AG04449 (cell line): ENCODE measurements at regions of chr1 and their contacts with region 1.

Region 1: GRCh38 chr1:94061513-94062443 is 59.2 kb downstream of the ABCA4 start:
- DNase-seq: no peak
- H3K4me3 ChIP-seq: no peak overlapping the region
- CTCF ChIP-seq: peak; percentile 88

Region 2: GRCh38 chr1:93964777-93965200 is 97.0 kb before region 1 on chr1:
- CTCF ChIA-PET with region 1: no interaction called
- POLR2A ChIA-PET with region 1: no interaction called
- DNase-seq: no peak
- H3K4me3 ChIP-seq: no peak overlapping the region
- CTCF ChIP-seq: no peak

Region 3: DNA sequence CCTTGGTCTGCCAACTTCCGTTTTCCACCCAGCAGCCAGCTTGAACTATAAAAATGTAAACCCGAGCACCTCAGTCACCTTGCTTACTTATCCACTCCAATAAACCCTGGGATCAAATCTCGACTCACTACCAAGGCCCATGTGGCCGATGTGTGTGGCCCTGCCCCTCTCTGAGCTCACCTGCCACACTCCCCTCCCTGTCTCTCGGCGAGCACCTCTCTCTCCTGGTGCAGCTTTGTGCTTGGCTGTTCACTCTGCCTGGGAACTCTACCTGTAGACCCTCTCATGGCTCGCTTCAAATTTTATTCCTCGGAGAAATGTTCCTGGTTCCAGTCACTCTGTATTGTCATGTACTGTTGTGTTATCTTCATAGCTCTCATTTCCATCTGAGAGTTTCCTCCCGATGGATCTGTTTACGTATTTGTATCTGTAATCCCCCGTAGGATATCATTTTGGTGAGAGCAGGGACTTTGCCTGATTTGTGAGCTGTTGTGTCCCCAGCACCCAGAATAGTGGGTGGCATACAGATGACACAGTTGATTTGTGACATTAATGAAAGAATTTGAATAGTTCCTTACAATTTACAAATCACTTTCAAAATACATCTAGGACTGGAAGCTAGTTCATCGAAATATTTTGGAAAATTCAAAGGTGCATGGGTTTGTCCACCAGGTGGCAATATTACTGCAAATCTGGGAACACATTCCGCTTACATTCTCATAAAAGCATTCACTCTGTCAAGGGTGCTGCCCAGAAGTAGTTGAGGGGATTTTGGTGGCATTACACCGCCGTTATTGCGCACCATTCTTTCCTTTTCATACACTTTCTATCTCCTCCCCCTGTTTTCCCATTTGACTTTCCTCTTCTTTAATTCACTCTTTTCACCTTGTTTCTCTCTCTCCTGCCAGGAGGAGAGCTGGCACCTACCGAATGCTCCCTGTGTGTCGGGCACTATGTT is 36.1 kb before region 1 on chr1:
- CTCF ChIA-PET with region 1: interaction called, 102 read pairs
- POLR2A ChIA-PET with region 1: no interaction called
- DNase-seq: no peak
- H3K4me3 ChIP-seq: no peak overlapping the region
- CTCF ChIP-seq: peak; percentile 41

Region 4: DNA sequence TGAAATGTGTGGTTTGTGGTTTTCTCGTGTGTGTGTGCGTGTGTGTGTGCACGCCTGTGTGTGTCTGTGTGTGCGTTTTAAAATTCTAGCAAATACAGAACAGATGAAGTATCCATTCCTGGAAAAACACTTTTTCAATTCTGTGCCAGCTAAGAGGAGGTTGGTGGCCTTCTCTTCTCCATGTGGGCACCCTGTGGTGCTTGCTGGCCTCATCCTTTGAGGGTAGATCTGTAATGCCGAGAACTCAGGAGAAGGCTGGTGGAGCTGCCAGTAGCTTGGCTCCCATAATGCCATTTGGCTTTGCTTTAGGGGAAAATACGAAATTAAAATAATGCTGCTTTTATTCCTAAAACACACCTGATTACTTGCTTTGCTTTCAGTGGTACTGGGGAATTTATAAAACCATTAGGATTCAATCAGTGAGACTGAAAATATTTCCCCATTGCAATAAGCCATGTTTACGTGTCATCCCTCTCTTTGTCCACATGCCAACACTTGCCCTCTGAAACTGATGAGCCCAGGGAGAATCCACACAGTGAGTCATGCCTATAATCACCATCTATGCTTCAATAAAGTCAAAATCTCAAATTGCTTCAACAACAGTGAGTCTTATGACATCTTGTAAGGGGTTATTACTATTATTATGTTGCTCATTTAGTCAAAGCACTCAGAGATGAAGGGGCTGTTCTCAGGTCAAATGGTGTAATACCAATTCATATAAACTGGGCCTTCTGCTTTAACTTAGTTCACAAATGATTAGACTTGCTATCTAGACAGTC is 20.0 kb after region 1 on chr1:
- CTCF ChIA-PET with region 1: interaction called, 17 read pairs
- POLR2A ChIA-PET with region 1: no interaction called
- DNase-seq: peak; percentile 82
- H3K4me3 ChIP-seq: no peak overlapping the region
- CTCF ChIP-seq: no peak

Region 5: DNA sequence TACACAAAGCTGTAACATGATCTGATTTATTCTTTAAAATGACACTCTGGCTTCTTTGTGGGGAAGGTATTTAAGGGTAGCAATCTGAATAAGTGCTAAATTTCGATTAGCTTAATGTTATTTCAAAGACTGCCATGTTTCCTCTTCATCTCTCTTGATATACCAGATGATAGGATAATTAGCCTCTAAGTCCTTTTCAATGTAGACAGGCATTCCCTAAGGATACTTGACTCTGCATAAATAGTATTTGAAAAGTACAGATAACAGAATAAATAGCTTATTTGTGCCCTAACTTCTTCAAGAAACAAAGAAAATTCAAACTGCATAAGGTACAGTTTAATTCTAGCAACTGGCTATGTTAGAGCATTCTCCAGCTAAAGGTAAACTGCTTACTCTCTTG is 129.4 kb after region 1 on chr1:
- CTCF ChIA-PET with region 1: interaction called, 16 read pairs
- POLR2A ChIA-PET with region 1: no interaction called
- DNase-seq: no peak
- H3K4me3 ChIP-seq: no peak overlapping the region
- CTCF ChIP-seq: no peak

Region 6: DNA sequence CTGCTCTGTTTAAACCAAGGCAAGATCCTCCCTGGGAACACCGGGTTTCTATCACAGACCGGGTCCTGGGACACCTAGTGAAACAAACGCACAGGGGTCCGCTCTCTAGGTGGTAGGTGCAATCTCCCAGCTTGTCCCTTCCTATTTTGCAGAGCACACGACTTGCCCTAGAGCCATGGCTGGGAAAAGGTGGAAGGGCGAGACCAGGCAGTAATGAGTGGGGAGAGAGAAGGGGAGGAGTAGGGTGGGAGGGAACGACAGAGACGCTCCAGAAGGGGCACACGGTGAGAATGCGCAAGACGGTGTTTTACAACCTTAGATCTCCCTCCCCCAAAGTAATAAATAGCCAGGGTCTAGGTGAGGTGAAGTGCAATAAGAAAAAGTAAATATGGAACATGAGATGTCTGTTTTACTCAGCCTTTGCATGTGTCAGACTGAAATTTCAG is 184.9 kb after region 1 on chr1:
- CTCF ChIA-PET with region 1: interaction called, 20 read pairs
- POLR2A ChIA-PET with region 1: no interaction called
- DNase-seq: no peak
- H3K4me3 ChIP-seq: peak overlapping the region; percentile 68
- CTCF ChIP-seq: no peak

Region 7: DNA sequence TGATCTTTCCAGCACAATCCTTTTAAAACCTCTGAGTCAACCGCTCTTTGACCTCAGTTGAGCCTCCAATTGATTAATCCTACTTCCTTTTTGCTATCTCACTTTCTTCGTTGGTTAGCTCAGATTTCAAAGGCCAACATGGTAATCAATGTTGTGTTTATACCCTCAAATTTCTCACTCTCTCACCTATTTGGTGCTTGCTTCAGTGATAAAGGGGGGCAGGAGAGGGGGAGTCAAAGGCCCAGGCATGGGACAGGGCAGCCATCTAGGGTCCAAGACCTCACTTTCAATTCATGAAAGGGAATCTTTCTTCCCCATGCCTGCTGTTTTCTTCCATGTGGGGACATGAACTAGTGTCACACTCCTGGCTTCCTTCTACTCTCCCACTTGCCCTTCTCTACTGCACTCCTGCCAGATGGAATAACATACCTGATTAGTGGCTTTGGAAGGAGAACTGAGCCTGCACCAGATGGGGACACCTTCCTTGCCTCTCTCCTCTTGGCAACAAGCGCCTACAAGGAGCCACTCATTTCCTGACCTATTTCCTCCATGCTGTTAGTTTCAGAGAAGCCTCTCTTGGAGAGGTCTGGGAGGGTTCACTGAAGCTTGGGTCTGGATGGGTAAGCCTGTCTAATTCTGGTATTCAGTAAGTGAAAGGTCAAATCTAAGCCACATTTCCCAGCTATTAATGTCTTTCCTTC is 248.9 kb after region 1 on chr1:
- CTCF ChIA-PET with region 1: no interaction called
- POLR2A ChIA-PET with region 1: no interaction called
- DNase-seq: no peak
- H3K4me3 ChIP-seq: no peak overlapping the region
- CTCF ChIP-seq: no peak

Region 8: GRCh38 chr1:94463765-94464330 is 402.1 kb after region 1 on chr1:
- CTCF ChIA-PET with region 1: interaction called, 31 read pairs
- POLR2A ChIA-PET with region 1: no interaction called
- DNase-seq: no peak
- H3K4me3 ChIP-seq: no peak overlapping the region
- CTCF ChIP-seq: peak; percentile 45